ENCODE measurements at regions of chr2 and their contacts with region 1.

Region 1: GRCh38 chr2:200864176-200864976 is at the start of gene CLK1:
- DNase-seq: peak; percentile 98
- ATAC-seq: peak; percentile 77
- H3K4me3 Mint-ChIP-seq: peak within 1 kb of the TSS; percentile 87
- H3K27ac Mint-ChIP-seq: peak within 1 kb of the TSS; percentile 99
- H3K4me1 Mint-ChIP-seq: peaks cover 26% of the 10 kb centered on the region
- H3K27me3 Mint-ChIP-seq: no peaks in the 10 kb centered on the region
- total RNA-seq, gene CLK1: 86.4 to 99.3 TPM

Region 2: DNA sequence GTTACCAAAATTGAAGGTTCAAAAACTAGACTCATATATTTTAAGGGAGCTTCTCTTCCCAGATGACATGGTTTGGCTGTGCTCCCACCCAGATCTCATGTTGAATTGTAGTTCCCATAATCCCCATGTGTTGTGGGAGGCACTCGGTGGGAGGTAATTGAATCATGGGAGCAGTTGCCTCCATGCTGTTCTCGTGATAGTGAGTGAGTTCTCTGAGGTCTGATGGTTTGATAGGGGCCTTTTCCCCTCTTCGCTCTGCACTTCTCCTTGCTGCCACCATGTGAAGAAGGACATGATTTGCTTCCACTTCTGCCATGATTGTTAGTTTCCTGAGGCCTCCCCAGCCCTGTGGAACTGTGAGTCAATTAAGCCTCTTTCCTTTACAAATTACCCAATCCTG is 768.9 kb before region 1 on chr2:
- CTCF ChIA-PET with region 1: no interaction called
- POLR2A ChIA-PET with region 1: no interaction called
- intact Hi-C with region 1: no loop called
- DNase-seq: no peak
- ATAC-seq: no peak
- H3K4me3 Mint-ChIP-seq: no peak overlapping the region
- H3K27ac Mint-ChIP-seq: no peak overlapping the region
- H3K4me1 Mint-ChIP-seq: no peaks in the 10 kb centered on the region
- H3K27me3 Mint-ChIP-seq: peaks cover 13% of the 10 kb centered on the region

Region 3: DNA sequence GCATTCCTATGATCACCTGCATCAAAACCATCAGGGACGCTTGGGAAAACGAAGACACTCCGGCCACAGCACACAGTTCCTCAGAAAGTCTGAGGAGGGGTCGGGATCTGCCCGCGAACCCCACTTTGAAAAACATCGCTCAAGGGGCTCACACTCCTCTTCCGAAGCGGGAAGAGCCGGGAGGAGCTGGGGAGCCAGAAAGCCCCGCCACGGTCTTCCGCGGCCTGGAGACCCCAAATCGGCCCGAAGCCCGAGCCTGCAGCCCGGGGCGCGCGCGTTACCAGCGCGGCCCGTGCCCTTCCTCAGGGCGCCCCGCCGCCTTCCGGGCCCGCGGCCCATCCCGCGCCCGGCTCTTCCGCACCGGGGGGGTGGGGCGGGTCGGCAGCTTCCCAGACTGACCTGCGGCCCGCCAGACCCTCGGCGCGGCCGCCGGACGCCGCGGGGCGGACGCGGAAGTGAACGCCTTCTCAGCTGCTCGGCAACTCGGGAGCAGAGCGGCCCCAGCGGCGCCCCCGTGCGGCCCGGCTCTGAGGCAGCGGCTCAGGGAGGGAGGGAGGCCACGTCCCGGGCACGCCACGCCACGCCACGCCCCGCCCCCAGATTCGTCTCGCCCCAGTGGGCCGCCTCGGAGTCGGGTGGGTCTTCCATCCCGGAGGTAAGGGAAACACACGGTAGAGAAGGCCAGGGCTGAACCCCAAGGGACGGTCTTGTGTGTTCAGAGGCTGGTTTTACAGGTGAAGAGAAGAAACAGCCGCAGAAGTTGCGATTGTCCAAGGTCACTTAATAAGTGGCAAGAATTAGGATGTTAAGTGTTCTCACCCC is 354.6 kb before region 1 on chr2 and contains the start of gene KCTD18:
- CTCF ChIA-PET with region 1: no interaction called
- POLR2A ChIA-PET with region 1: no interaction called
- intact Hi-C with region 1: loop called in 1 of 2 experiments (anchors 5 kb)
- DNase-seq: peak; percentile 94
- ATAC-seq: peak; percentile 98
- H3K4me3 Mint-ChIP-seq: peak within 1 kb of the TSS; percentile 85
- H3K27ac Mint-ChIP-seq: peak within 1 kb of the TSS; percentile 92
- H3K4me1 Mint-ChIP-seq: peaks cover 30% of the 10 kb centered on the region
- H3K27me3 Mint-ChIP-seq: no peaks in the 10 kb centered on the region
- total RNA-seq, gene KCTD18: 15.9 to 17.4 TPM

Region 4: GRCh38 chr2:200703127-200703925 is 161.1 kb before region 1 on chr2:
- CTCF ChIA-PET with region 1: no interaction called
- POLR2A ChIA-PET with region 1: interaction called, 3 read pairs
- intact Hi-C with region 1: loop called in 1 of 2 experiments (anchors 1 kb)
- DNase-seq: peak; percentile 61
- ATAC-seq: peak; percentile 85
- H3K4me3 Mint-ChIP-seq: peak overlapping the region; percentile 37
- H3K27ac Mint-ChIP-seq: peak overlapping the region; percentile 88
- H3K4me1 Mint-ChIP-seq: peaks cover 62% of the 10 kb centered on the region
- H3K27me3 Mint-ChIP-seq: peaks cover 1% of the 10 kb centered on the region

Region 5: DNA sequence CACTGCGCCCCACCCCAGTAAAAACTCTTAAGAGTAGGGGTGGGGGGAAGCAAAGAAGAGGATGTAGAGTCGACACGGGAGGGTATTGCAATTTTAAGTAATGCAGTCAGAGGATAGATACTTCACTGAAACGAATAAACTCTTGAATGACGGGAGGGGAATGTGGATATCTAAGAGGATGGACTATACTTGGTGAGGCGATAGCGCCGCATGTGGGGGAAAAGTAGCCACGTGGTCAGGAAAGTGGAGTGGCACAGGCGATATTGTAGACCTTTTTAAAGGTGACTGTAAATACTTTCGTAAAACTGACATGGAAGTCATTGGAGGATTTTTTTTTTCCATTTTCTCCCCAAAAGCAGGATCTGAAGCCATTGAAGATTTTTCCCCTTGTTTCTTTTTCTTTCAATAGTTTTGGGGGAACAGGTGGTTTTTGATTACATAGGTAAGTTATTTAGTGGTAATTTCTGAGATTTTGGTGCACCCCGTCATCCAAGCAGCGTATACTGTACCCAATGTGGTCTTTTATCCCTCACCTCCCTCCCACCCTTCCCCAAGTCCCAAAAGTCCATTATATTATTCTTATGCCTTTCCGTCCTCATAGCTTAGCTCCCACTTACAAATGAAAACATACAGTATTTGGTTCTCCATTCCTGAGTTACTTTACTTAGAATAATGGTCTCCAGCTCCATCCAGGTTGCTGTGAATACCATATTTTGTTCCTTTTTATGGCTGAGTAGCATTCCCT is 13.7 kb before region 1 on chr2:
- CTCF ChIA-PET with region 1: interaction called, 5 read pairs
- POLR2A ChIA-PET with region 1: interaction called, 10 read pairs
- intact Hi-C with region 1: no loop called
- DNase-seq: no peak
- ATAC-seq: no peak
- H3K4me3 Mint-ChIP-seq: peak overlapping the region; percentile 5
- H3K27ac Mint-ChIP-seq: peak overlapping the region; percentile 2
- H3K4me1 Mint-ChIP-seq: no peaks in the 10 kb centered on the region
- H3K27me3 Mint-ChIP-seq: no peaks in the 10 kb centered on the region

Region 6: GRCh38 chr2:201071479-201072200 is 207.3 kb after region 1 on chr2 and contains the starts of genes HYCC2 and NDUFB3:
- CTCF ChIA-PET with region 1: interaction called, 3 read pairs
- POLR2A ChIA-PET with region 1: no interaction called
- intact Hi-C with region 1: loop called in 1 of 2 experiments (anchors 1 kb)
- DNase-seq: peak; percentile 95
- ATAC-seq: peak; percentile 94
- H3K4me3 Mint-ChIP-seq: peak within 1 kb of the TSS; percentile 97
- H3K27ac Mint-ChIP-seq: peak within 1 kb of the TSS; percentile 96
- H3K4me1 Mint-ChIP-seq: peaks cover 58% of the 10 kb centered on the region
- H3K27me3 Mint-ChIP-seq: no peaks in the 10 kb centered on the region
- total RNA-seq, gene HYCC2: 15.8 to 16.0 TPM
- total RNA-seq, gene NDUFB3: 126 to 150 TPM

Region 7: GRCh38 chr2:202265467-202266277 is 1401.3 kb after region 1 on chr2 and contains the start of gene NOP58:
- CTCF ChIA-PET with region 1: no interaction called
- POLR2A ChIA-PET with region 1: no interaction called
- intact Hi-C with region 1: loop called in 1 of 2 experiments (anchors 5 kb)
- DNase-seq: peak; percentile 95
- ATAC-seq: peak; percentile 84
- H3K4me3 Mint-ChIP-seq: no peak within 1 kb of the TSS
- H3K27ac Mint-ChIP-seq: peak within 1 kb of the TSS; percentile 78
- H3K4me1 Mint-ChIP-seq: peaks cover 15% of the 10 kb centered on the region
- H3K27me3 Mint-ChIP-seq: no peaks in the 10 kb centered on the region
- total RNA-seq, gene NOP58: 160 to 180 TPM

Measured in activated CD4-positive, alpha-beta T cell treated with anti-CD3 and anti-CD28 coated beads for 36 hours (primary cell).